Heart left ventricle (tissue), 16 donors: ENCODE measurements at regions of chr3 and their contacts with region 1.

Region 1: GRCh38 chr3:16190704-16191103 is 16.2 kb downstream of the GALNT15 start:
- DNase-seq: no peak
- ATAC-seq: peak in 1 of 4 donors; percentile 26
- H3K4me3 ChIP-seq: no peak overlapping the region
- H3K27ac ChIP-seq: no peak overlapping the region
- H3K4me1 ChIP-seq: peaks cover 0 to 6% (median 0%) of the 10 kb centered on the region in 12 donors
- H3K27me3 ChIP-seq: no peaks in the 10 kb centered on the region
- CTCF ChIP-seq: no peak
- POLR2A ChIP-seq: no peak

Region 2: DNA sequence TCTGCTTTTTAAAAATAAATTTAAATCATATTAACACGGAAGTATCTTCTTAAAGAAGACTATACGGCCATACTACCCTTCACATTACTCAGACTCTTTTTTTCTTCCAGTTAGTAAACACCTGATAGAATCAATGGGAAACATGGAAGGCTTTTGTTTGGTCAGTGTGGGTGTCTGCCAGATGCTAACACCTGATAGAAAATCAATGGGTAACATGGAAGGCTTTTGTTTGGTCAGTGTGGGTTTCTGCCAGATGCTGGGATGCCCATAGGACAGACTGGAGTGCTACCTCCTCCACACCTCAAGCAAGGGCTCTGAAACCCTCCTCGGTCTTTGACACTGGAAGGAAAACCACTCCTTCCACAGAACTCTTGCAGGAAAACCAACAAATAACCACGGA is 618.6 kb before region 1 on chr3:
- intact Hi-C with region 1: no loop called
- DNase-seq: no peak
- ATAC-seq: no peak
- H3K4me3 ChIP-seq: no peak overlapping the region
- H3K27ac ChIP-seq: no peak overlapping the region
- H3K4me1 ChIP-seq: peaks cover 0 to 5% (median 0%) of the 10 kb centered on the region in 12 donors
- H3K27me3 ChIP-seq: no peaks in the 10 kb centered on the region
- CTCF ChIP-seq: no peak
- POLR2A ChIP-seq: no peak

Region 3: GRCh38 chr3:15933439-15934139 is 257.1 kb before region 1 on chr3:
- intact Hi-C with region 1: no loop called
- DNase-seq: no peak
- ATAC-seq: no peak
- H3K4me3 ChIP-seq: no peak overlapping the region
- H3K27ac ChIP-seq: no peak overlapping the region
- H3K4me1 ChIP-seq: peaks cover 0 to 28% (median 14%) of the 10 kb centered on the region in 12 donors
- H3K27me3 ChIP-seq: no peaks in the 10 kb centered on the region
- CTCF ChIP-seq: no peak
- POLR2A ChIP-seq: no peak

Region 4: DNA sequence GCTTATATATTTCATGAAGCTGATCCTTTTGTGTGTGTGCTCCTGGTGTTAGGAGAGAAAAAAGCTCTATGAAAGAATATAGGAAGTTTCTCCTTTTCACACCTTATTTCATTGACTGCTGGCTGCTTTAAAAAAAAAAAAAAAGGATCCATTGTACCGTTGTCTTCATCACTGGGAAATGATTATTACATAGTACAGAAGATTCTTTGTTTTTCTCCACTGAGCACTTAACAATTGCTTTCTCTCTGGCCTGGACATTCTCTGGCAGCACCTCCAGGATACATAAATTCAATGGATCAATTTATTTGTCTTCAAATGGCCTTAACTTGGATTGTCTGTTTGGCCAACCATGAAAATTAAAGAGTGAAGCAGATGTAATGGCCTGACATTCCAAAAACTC is 36.9 kb after region 1 on chr3:
- intact Hi-C with region 1: loop called in 1 of 10 experiments (anchors 5 kb)
- DNase-seq: no peak
- ATAC-seq: no peak
- H3K4me3 ChIP-seq: no peak overlapping the region
- H3K27ac ChIP-seq: no peak overlapping the region
- H3K4me1 ChIP-seq: peaks cover 0 to 11% (median 0%) of the 10 kb centered on the region in 12 donors
- H3K27me3 ChIP-seq: no peaks in the 10 kb centered on the region
- CTCF ChIP-seq: no peak
- POLR2A ChIP-seq: no peak